Prostate gland (tissue), 2 donors: ENCODE measurements at regions of chr1 and their contacts with region 1.

Region 1: GRCh38 chr1:151728151-151729054 is 7.1 kb downstream of the RIIAD1 start:
- DNase-seq: no peak
- H3K4me3 ChIP-seq: no peak overlapping the region
- H3K27ac ChIP-seq: no peak overlapping the region
- H3K4me1 ChIP-seq: no peaks in the 10 kb centered on the region
- H3K27me3 ChIP-seq: no peaks in the 10 kb centered on the region
- CTCF ChIP-seq: no peak
- POLR2A ChIP-seq: no peak

Region 2: DNA sequence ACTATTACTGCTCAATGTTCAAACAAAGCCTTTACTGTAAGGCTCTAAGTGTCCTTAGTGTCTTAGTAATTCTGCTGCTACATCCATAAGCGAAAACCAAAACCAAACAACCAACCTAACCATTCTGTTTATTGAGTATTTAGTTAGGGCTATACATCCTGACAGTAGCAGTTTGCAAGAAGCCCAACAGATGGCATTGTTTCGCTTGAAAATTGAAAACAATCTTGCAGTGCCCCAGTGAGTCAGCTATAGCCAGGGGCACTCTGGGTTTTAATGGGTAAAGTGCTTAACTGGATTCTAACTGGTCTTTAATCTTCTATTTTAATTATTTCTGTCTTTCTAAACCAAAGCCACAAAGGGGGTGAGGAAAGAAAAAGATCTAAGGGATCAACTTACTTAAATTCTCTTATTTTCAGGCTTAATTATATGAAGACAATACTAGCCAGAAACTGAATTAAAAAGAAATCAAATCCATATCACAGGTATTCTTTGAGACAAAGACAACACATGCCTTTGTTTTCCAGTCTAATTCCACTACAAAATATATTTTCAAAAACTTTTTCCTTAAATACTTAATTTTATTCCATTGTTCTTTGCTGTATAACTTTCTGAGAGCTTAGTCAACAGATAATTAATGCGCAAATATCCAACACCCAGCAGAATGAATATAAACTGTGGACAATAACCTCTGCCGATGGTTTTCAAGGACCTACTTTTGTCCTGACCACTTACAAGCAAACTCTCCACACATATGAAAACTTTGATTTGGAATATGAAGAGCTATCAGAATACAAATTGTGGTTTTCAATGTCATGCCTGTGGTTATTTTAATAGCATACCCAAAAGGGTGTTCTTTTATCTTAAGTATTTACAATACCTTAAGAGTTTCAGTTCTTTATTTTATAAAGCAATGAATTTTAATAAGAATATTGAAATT is 284.3 kb before region 1 on chr1:
- intact Hi-C with region 1: loop called (anchors 5 kb)
- DNase-seq: peak; percentile 71
- H3K4me3 ChIP-seq: no peak overlapping the region
- H3K27ac ChIP-seq: no peak overlapping the region
- H3K4me1 ChIP-seq: peaks cover 9% of the 10 kb centered on the region
- H3K27me3 ChIP-seq: no peaks in the 10 kb centered on the region
- CTCF ChIP-seq: peak in 3 of 4 experiments; percentile 49 to 80 (median 63)
- POLR2A ChIP-seq: no peak

Region 3: GRCh38 chr1:151693076-151693651 is 35.2 kb before region 1 on chr1:
- intact Hi-C with region 1: loop called (anchors 5 kb)
- DNase-seq: no peak
- H3K4me3 ChIP-seq: no peak overlapping the region
- H3K27ac ChIP-seq: no peak overlapping the region
- H3K4me1 ChIP-seq: no peaks in the 10 kb centered on the region
- H3K27me3 ChIP-seq: no peaks in the 10 kb centered on the region
- CTCF ChIP-seq: peak in 3 of 4 experiments; percentile 20 to 48 (median 46)
- POLR2A ChIP-seq: no peak

Region 4: GRCh38 chr1:151790071-151790940 is 61.9 kb after region 1 on chr1 and contains the start of gene TDRKH:
- intact Hi-C with region 1: no loop called
- DNase-seq: peak; percentile 99
- H3K4me3 ChIP-seq: peak within 1 kb of the TSS; percentile 50 to 67
- H3K27ac ChIP-seq: peak within 1 kb of the TSS; percentile 39 to 67
- H3K4me1 ChIP-seq: no peaks in the 10 kb centered on the region
- H3K27me3 ChIP-seq: no peaks in the 10 kb centered on the region
- CTCF ChIP-seq: peak in 2 of 4 experiments; percentile 42 to 50
- POLR2A ChIP-seq: peak; percentile 80
- total RNA-seq, gene TDRKH: 21.1 to 25.0 TPM